ENCODE measurements at regions of chr15 and their contacts with region 1.

Region 1: DNA sequence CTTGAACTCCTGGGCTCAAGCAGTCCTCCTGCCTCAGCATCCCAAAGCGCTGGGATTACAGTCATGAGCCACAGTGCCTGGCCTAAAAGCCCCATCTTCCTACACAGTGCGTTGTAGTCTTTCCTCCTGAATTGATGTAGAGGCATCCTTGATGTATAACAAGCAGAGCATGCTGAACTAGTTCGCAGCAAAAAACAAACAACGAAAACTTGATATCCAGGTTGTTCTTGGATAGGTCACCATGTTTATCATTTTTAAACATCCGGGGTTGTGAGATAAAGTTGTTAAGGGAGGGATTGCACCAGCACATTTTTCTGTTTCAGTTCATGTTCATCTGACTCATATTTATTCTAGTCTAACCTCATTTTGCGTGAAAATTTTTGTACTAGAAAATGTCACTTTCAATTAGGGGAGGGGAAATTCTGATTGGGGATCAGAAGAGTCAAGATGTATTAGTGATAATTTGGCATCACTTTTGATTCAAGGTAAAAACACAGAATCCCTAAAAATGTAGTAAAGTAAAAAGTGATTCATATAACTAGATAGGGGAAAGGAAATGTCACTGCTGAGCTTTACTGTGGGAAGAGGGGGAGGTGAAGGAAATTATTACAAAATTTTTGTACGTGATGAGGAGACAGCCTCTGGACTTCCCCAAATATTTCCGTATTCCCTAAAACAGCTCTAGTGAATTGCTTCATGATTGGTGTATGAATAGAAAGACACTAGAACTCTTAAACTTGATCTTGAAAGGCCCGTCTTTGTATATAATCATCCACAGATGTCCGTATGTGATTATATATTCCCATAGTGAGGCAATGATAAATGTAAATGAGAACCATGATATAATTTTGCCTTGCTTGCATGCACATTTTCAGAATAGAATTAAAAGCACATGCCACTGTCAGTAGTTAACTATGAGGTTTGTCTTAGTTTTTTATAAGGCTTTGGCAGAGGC is 22.9 kb downstream of the RAB8B start:
- DNase-seq: peak in 1 of 9 experiments; percentile 56
- ATAC-seq: peak; percentile 45
- H3K4me3 ChIP-seq: no peak overlapping the region
- H3K4me3 Mint-ChIP-seq: peak overlapping the region; percentile 1
- H3K27ac ChIP-seq: peak overlapping the region in 1 of 2 experiments; percentile 63
- H3K27ac Mint-ChIP-seq: peak overlapping the region; percentile 82
- H3K4me1 ChIP-seq: peaks cover 49% of the 10 kb centered on the region
- H3K4me1 Mint-ChIP-seq: peaks cover 73% of the 10 kb centered on the region
- H3K27me3 ChIP-seq: no peaks in the 10 kb centered on the region
- H3K27me3 Mint-ChIP-seq: no peaks in the 10 kb centered on the region
- CTCF ChIP-seq: no peak

Region 2: DNA sequence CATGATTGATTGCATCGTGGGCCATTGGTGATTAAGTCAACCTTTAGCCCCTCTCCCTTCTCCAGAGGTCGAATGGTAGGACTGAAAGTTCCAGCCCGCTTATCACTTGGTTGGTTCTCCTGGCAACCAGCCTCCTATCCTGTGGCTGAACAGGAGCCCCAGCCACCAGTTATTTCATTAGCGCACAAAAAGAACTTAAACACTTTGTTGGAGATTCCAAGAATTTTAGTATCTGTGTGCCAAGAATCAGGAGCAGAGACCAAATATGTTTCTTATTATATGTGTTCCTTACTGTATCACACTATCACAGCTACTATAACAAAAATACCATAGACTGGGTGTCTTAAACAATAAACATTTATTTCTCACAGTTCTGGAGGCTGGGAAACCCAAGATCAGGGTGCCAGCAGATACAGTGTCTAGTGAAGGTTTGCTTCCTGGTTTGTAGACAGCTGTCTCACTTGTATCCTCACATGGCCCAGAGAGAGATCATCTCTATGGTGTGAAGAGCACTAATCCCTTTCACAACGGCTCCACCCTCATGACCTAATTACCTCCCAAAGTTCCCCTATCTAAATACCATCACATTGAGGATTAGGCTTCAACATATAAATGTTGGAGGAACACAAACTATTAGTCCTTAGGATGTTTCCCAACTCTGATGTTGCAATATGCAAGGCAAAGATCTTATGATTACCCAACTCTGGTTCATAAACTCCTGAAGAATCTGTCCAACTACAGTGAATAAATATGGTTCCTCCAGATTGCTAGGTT is 34.6 kb after region 1 on chr15:
- CTCF ChIA-PET with region 1: no interaction called
- POLR2A ChIA-PET with region 1: no interaction called
- intact Hi-C with region 1: loop called in 1 of 2 experiments (anchors 5 kb)
- DNase-seq: peak in 2 of 9 experiments; percentile 32 to 56
- ATAC-seq: no peak
- H3K4me3 ChIP-seq: no peak overlapping the region
- H3K4me3 Mint-ChIP-seq: no peak overlapping the region
- H3K27ac ChIP-seq: no peak overlapping the region
- H3K27ac Mint-ChIP-seq: peak overlapping the region; percentile 27
- H3K4me1 ChIP-seq: peaks cover 28% of the 10 kb centered on the region
- H3K4me1 Mint-ChIP-seq: peaks cover 54% of the 10 kb centered on the region
- H3K27me3 ChIP-seq: no peaks in the 10 kb centered on the region
- H3K27me3 Mint-ChIP-seq: no peaks in the 10 kb centered on the region
- CTCF ChIP-seq: no peak